Breast epithelium (tissue), 4 donors: ENCODE measurements at regions of chr7 and their contacts with region 1.

Region 1: DNA sequence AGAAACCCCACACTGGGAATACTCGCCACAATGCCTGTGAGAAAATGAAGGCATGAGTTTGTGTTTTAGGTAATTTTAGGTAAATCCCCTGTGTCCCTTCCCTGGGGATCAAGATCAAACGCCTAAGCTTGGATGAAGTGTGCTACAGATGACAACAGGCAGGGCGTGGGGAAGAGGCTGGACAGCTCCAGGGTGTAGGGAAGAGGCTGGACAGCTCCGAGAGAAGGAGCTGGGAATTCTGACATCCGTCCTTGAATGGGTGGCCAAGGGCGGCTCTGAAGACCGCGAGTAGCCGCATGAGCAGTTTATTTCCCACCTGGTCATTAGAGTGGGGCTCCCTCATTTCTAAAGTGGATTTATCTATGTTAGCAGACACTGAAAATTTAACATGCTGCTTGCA is 109.7 kb downstream of the RAMP3 start:
- DNase-seq: no peak
- H3K4me3 ChIP-seq: no peak overlapping the region
- H3K27ac ChIP-seq: no peak overlapping the region
- H3K4me1 ChIP-seq: no peaks in the 10 kb centered on the region
- H3K27me3 ChIP-seq: no peaks in the 10 kb centered on the region
- CTCF ChIP-seq: no peak
- POLR2A ChIP-seq: no peak

Region 2: DNA sequence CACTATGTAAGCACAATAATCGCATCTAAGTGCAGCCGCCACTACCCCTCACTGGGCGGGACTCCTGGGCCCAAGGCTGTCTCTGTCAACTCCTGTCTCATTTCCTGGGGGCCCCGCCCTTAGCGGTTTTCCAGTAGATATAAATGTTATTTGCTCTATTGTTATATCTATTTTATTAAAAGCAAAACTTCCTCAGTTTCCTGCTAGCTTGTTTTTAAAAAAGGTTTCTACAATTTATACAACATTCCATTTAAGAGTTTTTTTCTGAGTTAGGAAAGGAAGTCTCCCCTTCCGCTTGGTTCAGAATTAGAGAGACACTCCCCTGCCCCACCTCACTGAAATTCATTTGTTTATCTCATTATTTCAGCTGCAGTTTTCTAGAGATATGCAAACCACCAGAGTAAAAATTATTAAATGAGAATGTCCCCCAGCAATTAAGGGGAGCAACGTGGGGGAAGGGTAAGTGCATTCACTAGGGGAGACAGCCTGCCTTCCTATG is 26.9 kb before region 1 on chr7:
- intact Hi-C with region 1: loop called (anchors 2 kb)
- DNase-seq: no peak
- H3K4me3 ChIP-seq: no peak overlapping the region
- H3K27ac ChIP-seq: peak overlapping the region in 1 of 2 donors; percentile 52
- H3K4me1 ChIP-seq: no peaks in the 10 kb centered on the region
- H3K27me3 ChIP-seq: no peaks in the 10 kb centered on the region
- CTCF ChIP-seq: no peak
- POLR2A ChIP-seq: no peak

Region 3: DNA sequence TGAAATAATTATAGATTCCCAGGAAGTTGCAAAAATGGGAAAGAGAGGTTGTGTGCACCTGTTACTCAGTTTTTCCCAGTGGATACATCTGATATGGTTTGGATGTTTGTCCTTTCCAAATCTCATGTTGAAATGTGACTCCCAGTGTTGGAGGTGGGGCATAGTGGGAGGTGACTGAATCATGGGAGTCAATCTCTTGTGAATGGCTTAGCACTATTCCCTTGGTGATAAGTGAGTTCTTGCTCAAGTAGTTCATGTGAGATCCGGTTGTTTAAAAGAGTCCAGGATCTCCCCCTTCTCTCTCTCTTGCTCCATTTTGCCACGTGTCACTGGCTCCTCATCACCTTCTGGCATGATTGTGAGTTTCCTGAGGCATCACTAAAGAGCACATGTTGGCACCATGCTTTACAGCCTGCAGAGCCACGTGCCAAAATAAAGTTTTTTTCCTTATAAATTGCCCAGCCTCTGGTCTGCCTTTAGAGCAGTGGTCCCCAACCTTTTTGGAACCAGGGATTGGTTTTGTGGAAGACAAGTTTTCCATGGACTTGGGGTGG is 39.6 kb after region 1 on chr7:
- intact Hi-C with region 1: no loop called
- DNase-seq: no peak
- H3K4me3 ChIP-seq: no peak overlapping the region
- H3K27ac ChIP-seq: no peak overlapping the region
- H3K4me1 ChIP-seq: no peaks in the 10 kb centered on the region
- H3K27me3 ChIP-seq: no peaks in the 10 kb centered on the region
- CTCF ChIP-seq: no peak
- POLR2A ChIP-seq: no peak